PC-9 (cell line): ENCODE measurements at regions of chr2 and their contacts with region 1.

Region 1: DNA sequence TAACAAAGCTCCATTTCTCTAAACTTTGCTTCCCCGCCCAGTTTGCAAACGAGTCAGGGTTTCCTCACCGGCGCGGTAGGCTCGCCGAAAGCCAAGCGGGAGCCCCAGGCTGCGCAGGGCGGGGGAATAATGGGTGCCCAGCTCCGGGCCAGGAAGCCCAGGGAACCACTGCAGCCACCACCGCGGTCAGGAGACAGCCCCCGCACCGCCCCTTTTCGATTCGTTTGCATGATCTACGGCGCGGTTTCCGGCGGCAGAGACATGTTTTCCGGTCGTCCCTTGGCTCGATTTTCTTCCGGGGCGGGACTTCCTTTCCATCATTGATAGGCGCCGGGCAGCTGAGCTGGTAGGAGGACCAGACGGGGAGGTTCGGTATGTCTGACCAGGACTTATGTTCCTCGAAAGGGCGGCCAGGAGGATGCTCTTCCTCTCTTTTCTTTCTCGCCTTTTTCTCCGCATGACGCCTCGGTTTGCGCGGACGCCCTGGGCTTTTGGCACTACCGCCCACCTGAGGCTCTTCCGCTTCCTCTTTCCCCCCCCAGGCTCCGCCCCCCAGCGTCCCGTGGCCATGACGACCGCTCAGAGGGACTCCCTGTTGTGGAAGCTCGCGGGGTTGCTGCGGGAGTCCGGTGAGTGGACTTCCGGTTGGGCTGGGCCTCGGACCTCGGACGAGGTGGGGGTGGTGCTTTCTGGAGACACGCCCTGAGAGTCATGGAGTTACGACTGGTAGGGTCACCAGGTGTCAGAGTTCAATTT is at the start of gene STK11IP:
- DNase-seq: peak; percentile 93 to 95
- H3K4me3 ChIP-seq: peak within 1 kb of the TSS; percentile 70
- H3K27ac ChIP-seq: peak within 1 kb of the TSS; percentile 85
- H3K4me1 ChIP-seq: peaks cover 19% of the 10 kb centered on the region
- H3K27me3 ChIP-seq: no peaks in the 10 kb centered on the region
- CTCF ChIP-seq: no peak
- total RNA-seq, gene STK11IP: 40.6 and 42.5 TPM in 2 replicates

Region 2: GRCh38 chr2:219543601-219544358 is 54.0 kb before region 1 on chr2 and contains the starts of genes CHPF and TMEM198:
- CTCF ChIA-PET with region 1: interaction called, 10 read pairs
- POLR2A ChIA-PET with region 1: interaction called, 5 read pairs
- intact Hi-C with region 1: loop called (anchors 1 kb)
- DNase-seq: peak; percentile 91 to 98
- H3K4me3 ChIP-seq: peak within 1 kb of the TSS; percentile 65
- H3K27ac ChIP-seq: peak within 1 kb of the TSS; percentile 55
- H3K4me1 ChIP-seq: no peaks in the 10 kb centered on the region; the same call in 1 of the 2 replicates
- H3K27me3 ChIP-seq: no peaks in the 10 kb centered on the region
- CTCF ChIP-seq: no peak
- total RNA-seq, gene CHPF: 78.2 and 89.7 TPM in 2 replicates
- total RNA-seq, gene TMEM198: 3.6 and 5.8 TPM in 2 replicates